ENCODE measurements at regions of chr3 and their contacts with region 1.

Region 1: DNA sequence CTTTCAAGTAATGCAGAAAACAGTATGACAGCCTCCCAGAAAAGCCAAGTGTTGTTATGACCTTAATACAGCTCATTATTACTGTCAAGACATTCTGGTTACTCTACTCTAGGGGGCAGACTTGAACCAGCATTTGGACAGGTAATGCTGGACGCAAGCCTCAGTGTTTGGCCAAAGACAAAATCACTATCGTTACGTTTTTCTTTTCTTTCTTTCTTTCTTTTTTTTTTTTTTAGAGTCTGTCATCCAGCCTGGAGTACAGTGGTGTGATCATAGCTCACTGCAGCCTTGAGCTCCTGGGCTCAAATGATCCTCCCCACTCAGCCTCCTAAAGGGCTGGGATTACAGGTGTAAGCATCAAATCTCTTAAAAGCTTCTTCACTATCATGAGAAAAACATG is 29.4 kb upstream of the TMEM45A start:
- DNase-seq: peak; percentile 38
- H3K4me3 ChIP-seq: no peak overlapping the region
- H3K27ac ChIP-seq: no peak overlapping the region
- H3K27me3 ChIP-seq: peaks cover 2% of the 10 kb centered on the region
- CTCF ChIP-seq: peak; percentile 77

Region 2: GRCh38 chr3:100316641-100317069 is 146.3 kb before region 1 on chr3:
- CTCF ChIA-PET with region 1: interaction called, 10 read pairs
- POLR2A ChIA-PET with region 1: no interaction called
- DNase-seq: peak; percentile 26
- H3K4me3 ChIP-seq: no peak overlapping the region
- H3K27ac ChIP-seq: no peak overlapping the region
- H3K27me3 ChIP-seq: no peaks in the 10 kb centered on the region
- CTCF ChIP-seq: peak; percentile 75

Region 3: GRCh38 chr3:100449214-100449613 is 13.8 kb before region 1 on chr3:
- CTCF ChIA-PET with region 1: interaction called, 30 read pairs
- POLR2A ChIA-PET with region 1: no interaction called
- DNase-seq: no peak
- H3K4me3 ChIP-seq: no peak overlapping the region
- H3K27ac ChIP-seq: no peak overlapping the region
- H3K27me3 ChIP-seq: no peaks in the 10 kb centered on the region
- CTCF ChIP-seq: no peak

Region 4: DNA sequence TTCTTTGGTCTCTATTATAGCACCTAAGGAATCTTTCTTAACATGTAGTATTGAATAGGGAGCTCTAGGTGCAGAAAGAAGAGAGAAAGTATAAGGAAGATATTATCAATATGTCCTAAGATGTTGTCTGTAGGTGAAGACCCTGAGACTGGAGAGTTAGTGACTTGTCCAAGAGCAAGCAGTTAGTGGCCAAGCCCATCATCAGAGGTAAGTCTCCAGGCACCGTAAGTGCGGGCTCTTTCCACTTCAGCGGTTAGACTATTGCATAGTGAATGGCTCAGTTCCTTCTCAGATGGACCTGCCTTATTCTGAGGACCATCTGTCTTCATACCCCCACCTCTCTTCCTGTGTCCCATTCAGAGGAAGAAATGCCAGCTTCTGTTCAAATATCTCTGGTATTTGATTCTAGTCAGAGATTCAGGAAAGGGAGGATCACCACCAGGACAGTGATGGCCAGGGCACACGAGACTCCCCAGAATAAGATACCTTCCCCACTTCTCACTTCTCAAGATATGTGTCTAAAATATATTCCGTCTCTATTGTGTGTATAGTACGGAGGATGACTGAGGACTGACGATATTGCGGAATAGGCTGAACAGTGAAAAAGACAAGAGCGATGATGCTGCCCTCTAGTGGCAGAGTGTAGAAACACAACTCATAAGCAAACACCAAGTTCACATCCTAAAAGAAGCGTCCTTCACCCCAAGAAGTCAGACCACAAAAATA is 127.3 kb after region 1 on chr3:
- CTCF ChIA-PET with region 1: interaction called, 398 read pairs
- POLR2A ChIA-PET with region 1: no interaction called
- DNase-seq: peak; percentile 44
- H3K4me3 ChIP-seq: peak overlapping the region; percentile 5; the same call in 1 of the 2 replicates
- H3K27ac ChIP-seq: no peak overlapping the region
- H3K27me3 ChIP-seq: peaks cover 4% of the 10 kb centered on the region
- CTCF ChIP-seq: peak; percentile 92

Region 5: GRCh38 chr3:100621251-100621650 is 158.2 kb after region 1 on chr3:
- CTCF ChIA-PET with region 1: no interaction called
- POLR2A ChIA-PET with region 1: no interaction called
- DNase-seq: no peak
- H3K4me3 ChIP-seq: no peak overlapping the region
- H3K27ac ChIP-seq: no peak overlapping the region
- H3K27me3 ChIP-seq: peaks cover 6% of the 10 kb centered on the region
- CTCF ChIP-seq: no peak

Region 6: GRCh38 chr3:100708967-100709841 is 246.2 kb after region 1 on chr3 and contains the start of gene TFG:
- CTCF ChIA-PET with region 1: interaction called, 28 read pairs
- POLR2A ChIA-PET with region 1: no interaction called
- DNase-seq: peak; percentile 99
- H3K4me3 ChIP-seq: peak within 1 kb of the TSS; percentile 87
- H3K27ac ChIP-seq: peak within 1 kb of the TSS; percentile 92
- H3K27me3 ChIP-seq: no peaks in the 10 kb centered on the region
- CTCF ChIP-seq: no peak
- polyA plus RNA-seq, gene TFG: 96.4 and 99.8 TPM in 2 replicates

Region 7: GRCh38 chr3:100737334-100737733 is 274.3 kb after region 1 on chr3:
- CTCF ChIA-PET with region 1: interaction called, 14 read pairs
- POLR2A ChIA-PET with region 1: no interaction called
- DNase-seq: no peak
- H3K4me3 ChIP-seq: no peak overlapping the region
- H3K27ac ChIP-seq: no peak overlapping the region
- H3K27me3 ChIP-seq: no peaks in the 10 kb centered on the region
- CTCF ChIP-seq: peak; percentile 53

Region 8: GRCh38 chr3:101195951-101196713 is 733.1 kb after region 1 on chr3:
- CTCF ChIA-PET with region 1: interaction called, 27 read pairs
- POLR2A ChIA-PET with region 1: no interaction called
- DNase-seq: no peak
- H3K4me3 ChIP-seq: no peak overlapping the region
- H3K27ac ChIP-seq: no peak overlapping the region
- H3K27me3 ChIP-seq: no peaks in the 10 kb centered on the region
- CTCF ChIP-seq: peak; percentile 76